ENCODE measurements at regions of chr2 and their contacts with region 1.

Region 1: DNA sequence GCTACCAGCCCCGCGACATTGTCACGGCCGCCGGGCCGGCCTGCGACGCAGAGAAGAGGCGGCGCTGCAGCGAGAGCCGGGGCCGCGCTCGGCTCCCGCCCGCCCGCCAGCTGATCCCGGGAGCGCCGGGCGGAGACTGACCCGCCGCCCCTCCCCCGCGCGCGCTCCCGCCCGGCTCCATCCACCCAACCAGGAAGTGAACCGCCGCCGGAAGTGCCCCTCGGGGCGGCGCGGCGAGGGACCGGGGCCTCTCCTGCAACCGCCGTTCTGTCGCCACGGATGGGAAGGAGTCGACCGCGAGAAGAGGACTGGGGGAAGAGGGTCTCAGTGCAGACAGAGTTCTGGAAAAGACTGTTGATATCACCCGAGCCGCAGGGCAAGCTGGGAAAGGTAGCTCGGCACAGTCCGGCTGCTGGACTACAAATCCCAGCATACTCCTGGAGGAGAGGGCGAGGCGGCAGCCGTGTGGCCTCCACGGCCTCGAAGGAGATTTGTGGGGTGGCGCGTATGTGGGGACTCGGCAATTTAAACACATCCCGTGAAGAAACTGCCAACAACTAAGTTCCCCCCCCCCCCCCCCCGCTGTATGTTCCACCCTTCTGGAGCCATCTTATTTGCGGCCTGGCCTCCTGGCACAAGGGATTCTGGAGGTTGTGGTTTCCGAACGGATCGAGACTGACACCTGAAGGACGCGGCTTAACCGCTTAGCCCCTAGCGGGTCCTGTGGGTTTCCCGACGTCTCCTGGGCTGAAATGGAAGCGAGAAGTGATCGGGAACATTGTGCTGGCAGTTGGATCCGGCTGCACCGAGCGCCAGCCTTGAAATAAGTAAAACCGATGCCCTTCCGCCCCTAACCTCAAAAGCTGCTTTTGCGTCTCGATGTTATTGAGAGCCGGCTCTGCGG is at the start of gene AAK1:
- DNase-seq: peak; percentile 91
- ATAC-seq: peak; percentile 58
- H3K4me3 Mint-ChIP-seq: peak within 1 kb of the TSS; percentile 85
- H3K27ac Mint-ChIP-seq: peak within 1 kb of the TSS; percentile 96
- H3K4me1 Mint-ChIP-seq: peaks cover 50% of the 10 kb centered on the region
- H3K27me3 Mint-ChIP-seq: no peaks in the 10 kb centered on the region
- CTCF ChIP-seq: no peak
- total RNA-seq, gene AAK1: 114 to 115 TPM

Region 2: GRCh38 chr2:69499242-69499641 is 144.6 kb before region 1 on chr2:
- CTCF ChIA-PET with region 1: no interaction called
- POLR2A ChIA-PET with region 1: no interaction called
- intact Hi-C with region 1: no loop called
- DNase-seq: no peak
- ATAC-seq: peak; percentile 62
- H3K4me3 Mint-ChIP-seq: peak overlapping the region; percentile 18
- H3K27ac Mint-ChIP-seq: peak overlapping the region; percentile 84
- H3K4me1 Mint-ChIP-seq: peaks cover 38% of the 10 kb centered on the region
- H3K27me3 Mint-ChIP-seq: no peaks in the 10 kb centered on the region
- CTCF ChIP-seq: no peak

Region 3: DNA sequence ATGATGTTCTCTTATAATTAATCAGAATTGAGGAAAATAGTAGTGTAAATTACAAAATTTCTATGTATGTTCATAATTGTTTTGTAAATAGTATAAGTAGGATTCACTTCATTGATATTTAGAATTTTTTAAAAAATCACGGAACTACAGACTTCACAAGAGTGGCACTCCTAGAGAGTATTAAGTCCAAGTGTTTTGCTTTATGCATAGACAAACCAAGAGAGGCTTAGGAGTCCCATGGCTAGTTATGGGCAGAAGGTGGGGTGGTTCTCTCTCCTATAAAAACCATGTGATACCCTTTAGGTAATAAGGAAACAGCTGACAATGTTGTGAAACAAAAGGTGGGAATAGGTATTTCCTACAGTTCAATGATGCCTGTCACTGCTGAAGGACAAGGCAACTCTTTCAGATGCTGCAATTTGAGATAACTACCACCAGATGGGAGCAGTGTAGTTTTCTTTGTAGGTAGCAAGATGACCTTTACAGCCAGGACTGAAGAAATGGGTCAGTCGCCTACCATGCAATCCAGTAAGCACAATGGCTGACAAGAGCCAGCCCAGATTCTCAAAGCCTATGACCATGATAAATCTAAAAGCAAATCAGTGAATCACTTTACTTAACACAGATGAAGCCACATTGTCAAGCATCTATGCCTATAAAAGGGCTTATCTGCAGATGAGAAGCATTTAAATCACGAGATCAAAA is 84.3 kb before region 1 on chr2:
- CTCF ChIA-PET with region 1: interaction called, 145 read pairs
- POLR2A ChIA-PET with region 1: interaction called, 17 read pairs
- intact Hi-C with region 1: loop called (anchors 5 kb)
- DNase-seq: peak; percentile 33
- ATAC-seq: peak; percentile 84
- H3K4me3 Mint-ChIP-seq: no peak overlapping the region
- H3K27ac Mint-ChIP-seq: peak overlapping the region; percentile 67
- H3K4me1 Mint-ChIP-seq: peaks cover 75% of the 10 kb centered on the region
- H3K27me3 Mint-ChIP-seq: no peaks in the 10 kb centered on the region
- CTCF ChIP-seq: peak; percentile 72

Region 4: GRCh38 chr2:69601179-69601612 is 42.7 kb before region 1 on chr2:
- CTCF ChIA-PET with region 1: interaction called, 4 read pairs
- POLR2A ChIA-PET with region 1: interaction called, 10 read pairs
- intact Hi-C with region 1: no loop called
- DNase-seq: no peak
- ATAC-seq: peak; percentile 86
- H3K4me3 Mint-ChIP-seq: no peak overlapping the region
- H3K27ac Mint-ChIP-seq: peak overlapping the region; percentile 82
- H3K4me1 Mint-ChIP-seq: peaks cover 90% of the 10 kb centered on the region
- H3K27me3 Mint-ChIP-seq: no peaks in the 10 kb centered on the region
- CTCF ChIP-seq: no peak

Region 5: DNA sequence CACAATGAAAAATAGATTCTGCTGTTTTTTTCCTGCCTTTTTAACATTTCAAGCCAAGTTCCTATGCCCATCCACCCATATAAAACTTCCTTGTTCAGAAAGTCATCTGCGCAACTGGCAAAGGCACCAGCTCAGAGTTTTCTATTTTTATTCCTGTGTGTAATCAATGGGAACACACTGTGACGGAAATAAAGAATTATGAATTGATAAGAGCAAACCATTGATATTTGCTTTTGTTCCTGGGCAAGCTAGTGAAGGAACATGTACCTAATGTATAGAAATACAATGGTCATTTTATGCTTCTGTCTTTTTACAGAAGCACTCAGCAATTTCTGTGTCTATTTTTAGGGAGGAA is 30.4 kb after region 1 on chr2:
- CTCF ChIA-PET with region 1: interaction called, 3 read pairs
- POLR2A ChIA-PET with region 1: interaction called, 5 read pairs
- intact Hi-C with region 1: loop called (anchors 2 kb)
- DNase-seq: no peak
- ATAC-seq: no peak
- H3K4me3 Mint-ChIP-seq: no peak overlapping the region
- H3K27ac Mint-ChIP-seq: no peak overlapping the region
- H3K4me1 Mint-ChIP-seq: peaks cover 25% of the 10 kb centered on the region
- H3K27me3 Mint-ChIP-seq: no peaks in the 10 kb centered on the region
- CTCF ChIP-seq: no peak

Region 6: DNA sequence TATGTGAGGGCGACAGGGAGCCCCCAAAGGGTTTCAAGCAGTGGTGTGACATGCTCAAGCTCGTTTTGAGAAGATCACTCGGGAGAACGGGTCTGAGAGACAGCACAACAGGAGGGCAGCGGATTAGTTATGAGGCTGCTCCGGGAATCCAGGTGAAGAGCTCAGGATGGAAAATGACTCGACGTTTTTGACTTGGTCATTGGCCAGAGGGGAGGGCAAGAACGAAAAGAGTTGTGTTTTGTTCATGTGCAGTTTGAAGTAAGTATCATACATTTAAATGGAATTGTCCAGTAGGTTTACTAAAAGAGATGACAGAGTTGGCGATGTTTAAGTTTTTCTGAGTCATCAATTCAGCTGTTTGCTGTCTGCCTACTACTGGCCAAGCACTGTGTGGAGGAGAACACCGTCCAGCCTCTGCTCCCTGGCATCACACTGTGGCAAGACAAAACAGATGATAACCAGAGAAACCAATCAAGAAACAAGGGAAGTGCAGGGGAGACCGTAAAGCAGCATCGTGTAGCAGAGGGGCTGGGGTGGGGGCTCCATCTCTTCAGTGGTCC is 72.8 kb after region 1 on chr2:
- CTCF ChIA-PET with region 1: interaction called, 27 read pairs
- POLR2A ChIA-PET with region 1: interaction called, 4 read pairs
- intact Hi-C with region 1: loop called (anchors 5 kb)
- DNase-seq: no peak
- ATAC-seq: no peak
- H3K4me3 Mint-ChIP-seq: no peak overlapping the region
- H3K27ac Mint-ChIP-seq: no peak overlapping the region
- H3K4me1 Mint-ChIP-seq: peaks cover 13% of the 10 kb centered on the region
- H3K27me3 Mint-ChIP-seq: no peaks in the 10 kb centered on the region
- CTCF ChIP-seq: no peak

Region 7: GRCh38 chr2:69734035-69734631 is 90.3 kb after region 1 on chr2:
- CTCF ChIA-PET with region 1: no interaction called
- POLR2A ChIA-PET with region 1: no interaction called
- intact Hi-C with region 1: no loop called
- DNase-seq: no peak
- ATAC-seq: no peak
- H3K4me3 Mint-ChIP-seq: no peak overlapping the region
- H3K27ac Mint-ChIP-seq: no peak overlapping the region
- H3K4me1 Mint-ChIP-seq: no peaks in the 10 kb centered on the region
- H3K27me3 Mint-ChIP-seq: no peaks in the 10 kb centered on the region
- CTCF ChIP-seq: no peak

Measured in activated CD8-positive, alpha-beta T cell treated with anti-CD3 and anti-CD28 coated beads for 36 hours (primary cell).